Left ventricle myocardium inferior (tissue), 1 donor: ENCODE measurements at regions of chr7 and their contacts with region 1.

Region 1: DNA sequence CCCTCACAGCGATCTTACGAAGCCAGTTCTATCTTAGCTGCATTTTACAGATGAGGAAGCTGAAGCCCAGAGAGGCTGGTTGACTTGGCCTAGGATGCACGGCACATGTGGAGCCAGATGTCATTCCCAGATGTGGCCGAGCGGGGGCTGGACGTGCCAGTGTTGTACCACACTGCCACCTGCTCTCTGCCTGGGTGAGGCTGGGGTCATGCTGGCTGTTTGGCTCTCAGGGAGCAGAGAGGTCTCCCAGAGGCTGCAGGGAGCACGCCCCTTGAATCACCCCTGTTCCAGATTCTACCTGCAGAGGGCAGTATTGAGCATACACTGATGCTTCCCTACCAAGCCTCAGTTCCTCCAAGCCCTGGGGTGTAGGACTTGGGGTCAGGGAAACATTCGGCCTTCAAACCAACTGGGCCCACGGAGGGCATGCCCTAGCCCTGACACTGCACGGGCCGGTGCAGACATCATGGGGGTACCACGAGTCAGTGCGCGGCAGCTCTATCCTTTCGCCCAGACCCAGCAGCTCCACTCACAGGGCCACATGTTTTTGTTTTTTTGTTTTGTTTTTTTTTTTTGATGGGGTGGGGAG is 3.8 kb upstream of the GTF2IRD1 start:
- DNase-seq: peak; percentile 25
- H3K4me3 ChIP-seq: no peak overlapping the region
- H3K27ac ChIP-seq: no peak overlapping the region
- H3K4me1 ChIP-seq: peaks cover 20% of the 10 kb centered on the region
- H3K27me3 ChIP-seq: no peaks in the 10 kb centered on the region
- CTCF ChIP-seq: peak; percentile 89

Region 2: GRCh38 chr7:74569501-74570075 is 119.7 kb after region 1 on chr7:
- intact Hi-C with region 1: loop called (anchors 10 kb)
- DNase-seq: no peak
- H3K4me3 ChIP-seq: no peak overlapping the region
- H3K27ac ChIP-seq: no peak overlapping the region
- H3K4me1 ChIP-seq: peaks cover 10% of the 10 kb centered on the region
- H3K27me3 ChIP-seq: no peaks in the 10 kb centered on the region
- CTCF ChIP-seq: no peak